ENCODE measurements at regions of chr11 and their contacts with region 1.

Region 1: GRCh38 chr11:19566583-19567379 is 145.9 kb upstream of the NAV2 start:
- DNase-seq: no peak
- H3K4me3 ChIP-seq: no peak overlapping the region
- H3K27ac ChIP-seq: no peak overlapping the region
- H3K4me1 ChIP-seq: peaks cover 5% of the 10 kb centered on the region
- H3K27me3 ChIP-seq: no peaks in the 10 kb centered on the region
- CTCF ChIP-seq: no peak

Region 2: DNA sequence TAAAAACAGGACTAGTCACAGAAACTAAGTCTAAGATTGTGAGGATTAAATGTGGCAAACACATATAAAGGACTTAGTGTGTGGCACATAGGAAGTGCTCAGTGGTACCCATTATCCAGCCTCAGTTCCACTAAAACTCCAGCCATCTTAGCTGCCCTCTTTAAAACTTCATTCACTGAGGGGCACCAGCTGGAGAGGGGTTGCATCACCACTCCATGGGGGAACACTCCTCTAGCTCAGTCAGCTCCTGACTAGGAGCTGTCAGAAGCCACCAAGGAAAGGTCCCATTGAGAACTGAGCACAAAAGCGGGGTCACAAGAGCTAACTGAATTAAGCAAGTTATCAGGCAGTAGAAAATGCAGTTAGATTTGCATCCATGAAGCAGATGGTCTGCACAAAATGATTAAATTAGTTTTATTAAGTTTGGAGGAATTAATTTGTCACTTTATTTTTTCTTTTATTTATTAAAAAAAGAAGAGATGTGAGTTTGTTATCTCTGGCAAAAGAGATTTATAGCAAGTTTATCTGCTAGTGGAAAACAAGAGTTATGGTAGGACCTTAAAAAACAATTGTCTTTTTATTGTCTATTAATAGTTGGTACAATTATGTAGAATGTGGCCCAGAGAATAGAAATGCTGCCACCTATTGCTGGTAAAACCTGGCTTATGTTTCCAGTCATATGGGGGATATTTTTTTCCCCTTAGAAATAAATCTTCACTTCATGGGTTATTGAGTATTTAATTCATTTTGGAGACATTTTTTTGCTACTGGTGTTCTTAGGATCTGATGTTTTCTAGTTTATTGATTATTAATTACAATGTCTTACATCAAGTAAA is 241.5 kb after region 1 on chr11:
- CTCF ChIA-PET with region 1: no interaction called
- dilution Hi-C with region 1: no loop called
- in situ Hi-C with region 1: no loop called
- intact Hi-C with region 1: loop called (anchors 2 kb)
- DNase-seq: no peak
- H3K4me3 ChIP-seq: no peak overlapping the region
- H3K27ac ChIP-seq: no peak overlapping the region
- H3K4me1 ChIP-seq: peaks cover 21% of the 10 kb centered on the region
- H3K27me3 ChIP-seq: no peaks in the 10 kb centered on the region
- CTCF ChIP-seq: peak; percentile 11 to 21